H1 (cell line): ENCODE measurements at regions of chr5 and their contacts with region 1.

Region 1: GRCh38 chr5:150175076-150175935 is 8.7 kb downstream of the CDX1 start:
- DNase-seq: peak in 1 of 2 experiments; percentile 66
- H3K4me3 ChIP-seq: no peak overlapping the region
- H3K27ac ChIP-seq: no peak overlapping the region
- H3K4me1 ChIP-seq: no peaks in the 10 kb centered on the region; a peak in 1 of 7 replicates
- H3K27me3 ChIP-seq: peaks cover 2 to 21% (median 14%) of the 10 kb centered on the region in 4 experiments
- CTCF ChIP-seq: peak; percentile 76 to 92 (median 84)
- EP300 ChIP-seq: no peak
- POLR2A ChIP-seq: no peak
- RAD21 ChIP-seq: peak; percentile 53 to 75

Region 2: DNA sequence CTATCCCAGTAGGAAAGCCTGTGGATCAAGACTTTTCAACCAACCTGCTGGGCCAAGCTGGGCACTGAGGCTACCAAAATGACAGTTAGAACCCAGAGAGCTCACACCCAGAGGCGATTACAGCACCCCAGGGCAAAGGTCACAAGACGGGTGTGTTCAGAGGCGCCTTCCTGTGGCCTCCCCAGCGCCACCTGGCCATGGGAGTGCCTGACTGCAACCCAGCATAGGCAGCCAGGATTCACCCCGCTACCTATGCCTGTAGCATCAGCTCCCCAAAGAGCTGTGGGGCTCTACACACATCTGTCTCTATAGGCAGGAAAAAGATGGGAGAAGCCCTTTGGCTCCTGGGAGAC is 53.2 kb before region 1 on chr5:
- CTCF ChIA-PET with region 1: interaction called, 14 read pairs
- POLR2A ChIA-PET with region 1: no interaction called
- DNase-seq: peak in 1 of 2 experiments; percentile 67
- H3K4me3 ChIP-seq: no peak overlapping the region
- H3K27ac ChIP-seq: no peak overlapping the region
- H3K4me1 ChIP-seq: peaks cover 0 to 6% (median 2%) of the 10 kb centered on the region in 4 experiments; a peak in 3 of 7 replicates
- H3K27me3 ChIP-seq: no peaks in the 10 kb centered on the region
- CTCF ChIP-seq: peak in 2 of 3 experiments; percentile 74 to 78; a peak in 3 of 4 replicates
- EP300 ChIP-seq: no peak
- POLR2A ChIP-seq: no peak
- RAD21 ChIP-seq: peak; percentile 57 to 67

Region 3: GRCh38 chr5:150143350-150144245 is 31.7 kb before region 1 on chr5:
- CTCF ChIA-PET with region 1: interaction called, 109 read pairs
- POLR2A ChIA-PET with region 1: no interaction called
- DNase-seq: no peak
- H3K4me3 ChIP-seq: no peak overlapping the region
- H3K27ac ChIP-seq: no peak overlapping the region
- H3K4me1 ChIP-seq: peaks cover 4 to 23% (median 16%) of the 10 kb centered on the region in 4 experiments
- H3K27me3 ChIP-seq: no peaks in the 10 kb centered on the region; a peak in 1 of 7 replicates
- CTCF ChIP-seq: no peak
- EP300 ChIP-seq: no peak
- POLR2A ChIP-seq: no peak
- RAD21 ChIP-seq: no peak

Region 4: GRCh38 chr5:150161242-150162141 is 13.8 kb before region 1 on chr5:
- CTCF ChIA-PET with region 1: interaction called, 268 read pairs
- POLR2A ChIA-PET with region 1: no interaction called
- DNase-seq: peak in 1 of 2 experiments; percentile 100
- H3K4me3 ChIP-seq: peak overlapping the region in 1 of 4 experiments; percentile 10; a peak in 1 of 8 replicates
- H3K27ac ChIP-seq: no peak overlapping the region
- H3K4me1 ChIP-seq: peaks cover 3 to 10% (median 6%) of the 10 kb centered on the region in 4 experiments
- H3K27me3 ChIP-seq: peaks cover 21 to 31% (median 26%) of the 10 kb centered on the region in 4 experiments
- CTCF ChIP-seq: peak in 2 of 3 experiments; percentile 92 to 99; a peak in 3 of 4 replicates
- EP300 ChIP-seq: no peak
- POLR2A ChIP-seq: no peak
- RAD21 ChIP-seq: peak; percentile 90 to 93

Region 5: DNA sequence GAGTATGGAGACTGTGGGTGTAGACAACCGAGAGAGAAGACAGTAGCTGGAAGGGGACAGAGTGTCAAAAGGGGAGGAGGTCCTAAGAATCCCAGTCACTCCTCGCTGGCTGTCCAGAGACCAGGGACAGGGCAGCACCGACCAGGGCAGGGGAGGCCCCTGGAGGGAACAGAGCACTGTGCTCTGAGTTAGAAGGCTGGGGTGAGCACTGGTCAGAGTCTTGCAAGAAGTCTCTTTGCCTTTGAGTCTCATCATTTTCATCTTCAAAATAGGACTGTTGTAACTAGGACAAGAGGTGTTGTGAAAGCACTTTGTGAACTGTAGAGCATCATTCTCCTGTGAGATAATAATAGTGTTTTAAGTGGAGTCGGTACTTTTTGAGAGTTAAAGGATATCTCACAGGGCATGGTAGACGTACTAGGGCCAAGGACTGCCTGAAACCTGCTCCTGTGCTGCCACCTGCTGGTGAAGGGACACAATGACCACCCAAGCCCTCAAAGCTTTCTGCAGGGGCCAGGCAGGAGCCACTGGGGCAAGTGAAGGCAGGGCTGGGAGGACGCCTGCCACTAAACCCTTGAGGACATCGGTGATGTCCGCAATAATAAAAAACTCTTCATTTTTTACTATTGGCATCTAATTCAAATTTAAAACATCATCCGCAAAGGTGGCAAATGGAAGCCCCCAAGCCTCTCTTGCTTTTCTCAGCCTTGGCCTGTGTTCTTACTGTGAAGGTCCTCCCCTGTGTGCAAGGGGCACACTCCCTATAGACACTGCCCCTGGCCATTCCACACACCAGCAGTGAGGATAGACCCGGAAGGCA is 42.8 kb after region 1 on chr5:
- CTCF ChIA-PET with region 1: interaction called, 406 read pairs
- POLR2A ChIA-PET with region 1: interaction called, 5 read pairs
- DNase-seq: peak; percentile 61 to 92
- H3K4me3 ChIP-seq: no peak overlapping the region
- H3K27ac ChIP-seq: no peak overlapping the region
- H3K4me1 ChIP-seq: 0 out of 7 replicates have a peak, but pooled peaks cover 0 to 3% (median 0%) of the 10 kb centered on the region in 4 experiments
- H3K27me3 ChIP-seq: peaks cover 0 to 6% (median 4%) of the 10 kb centered on the region in 4 experiments; a peak in 3 of 7 replicates
- CTCF ChIP-seq: peak in 2 of 3 experiments; percentile 89 to 95; a peak in 3 of 4 replicates
- EP300 ChIP-seq: no peak
- POLR2A ChIP-seq: no peak
- RAD21 ChIP-seq: peak; percentile 97 to 98

Region 6: GRCh38 chr5:150256410-150257064 is 81.2 kb after region 1 on chr5:
- CTCF ChIA-PET with region 1: interaction called, 20 read pairs
- POLR2A ChIA-PET with region 1: no interaction called
- DNase-seq: peak in 1 of 2 experiments; percentile 64
- H3K4me3 ChIP-seq: no peak overlapping the region
- H3K27ac ChIP-seq: no peak overlapping the region
- H3K4me1 ChIP-seq: peaks cover 0 to 3% (median 1%) of the 10 kb centered on the region in 4 experiments; a peak in 3 of 7 replicates
- H3K27me3 ChIP-seq: no peaks in the 10 kb centered on the region; a peak in 2 of 7 replicates
- CTCF ChIP-seq: peak; percentile 72 to 82 (median 75)
- EP300 ChIP-seq: no peak
- POLR2A ChIP-seq: no peak
- RAD21 ChIP-seq: peak; percentile 72 to 82

Region 7: GRCh38 chr5:150309227-150309885 is 134.1 kb after region 1 on chr5:
- CTCF ChIA-PET with region 1: no interaction called
- POLR2A ChIA-PET with region 1: no interaction called
- DNase-seq: no peak
- H3K4me3 ChIP-seq: no peak overlapping the region
- H3K27ac ChIP-seq: no peak overlapping the region
- H3K4me1 ChIP-seq: peaks cover 3 to 7% (median 3%) of the 10 kb centered on the region in 4 experiments
- H3K27me3 ChIP-seq: no peaks in the 10 kb centered on the region
- CTCF ChIP-seq: no peak
- EP300 ChIP-seq: no peak
- POLR2A ChIP-seq: no peak
- RAD21 ChIP-seq: no peak

Region 8: DNA sequence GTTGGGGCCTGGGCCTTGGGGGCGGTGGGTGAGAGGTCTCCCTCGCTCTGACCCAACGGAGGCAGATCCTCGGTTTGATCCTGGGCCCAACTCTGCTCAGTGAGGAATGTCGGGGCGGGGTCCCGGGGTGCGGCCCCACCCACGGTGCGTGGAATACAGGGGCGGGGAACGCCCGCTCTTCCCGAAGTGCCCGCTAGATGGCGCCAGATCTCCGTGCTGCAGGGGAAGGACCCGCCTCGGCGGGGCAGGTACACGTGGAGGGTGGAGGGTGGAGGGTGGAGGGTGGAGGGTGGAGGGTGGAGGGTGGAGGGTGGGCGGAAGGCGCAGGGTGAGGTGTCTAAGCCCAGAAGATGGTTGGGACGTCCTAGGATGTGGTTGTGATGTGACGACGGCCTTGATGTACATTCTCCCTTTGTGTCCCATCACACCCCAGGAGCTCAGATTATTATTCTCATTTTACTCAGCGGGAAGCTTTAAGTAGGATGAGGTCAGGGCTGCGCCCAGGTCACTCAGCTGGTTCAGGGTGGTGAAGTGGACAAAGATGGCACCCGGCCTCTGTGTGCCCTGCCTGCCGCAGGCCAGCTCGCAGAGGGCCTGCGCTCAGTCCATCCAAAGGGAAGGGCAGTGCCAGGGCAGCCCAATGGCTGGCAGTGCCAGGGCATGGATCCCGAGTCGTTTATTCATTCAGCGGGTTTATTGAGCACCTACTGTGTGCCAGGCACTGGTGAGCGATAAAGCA is 283.7 kb after region 1 on chr5:
- CTCF ChIA-PET with region 1: no interaction called
- POLR2A ChIA-PET with region 1: no interaction called
- DNase-seq: peak in 1 of 2 experiments; percentile 99
- H3K4me3 ChIP-seq: peak overlapping the region in 1 of 4 experiments; percentile 47; a peak in 2 of 8 replicates
- H3K27ac ChIP-seq: no peak overlapping the region
- H3K4me1 ChIP-seq: peaks cover 4 to 20% (median 9%) of the 10 kb centered on the region in 4 experiments
- H3K27me3 ChIP-seq: no peaks in the 10 kb centered on the region
- CTCF ChIP-seq: peak; percentile 69 to 92 (median 89)
- EP300 ChIP-seq: 0 out of 3 replicates have a peak, but pooled peaks of 1 of the 2 experiments have one; percentile 3
- POLR2A ChIP-seq: no peak
- RAD21 ChIP-seq: peak; percentile 89 to 91